Gastrocnemius medialis (tissue), 4 donors: ENCODE measurements at regions of chr17 and their contacts with region 1.

Region 1: GRCh38 chr17:63203652-63204051 is 237.6 kb downstream of the TANC2 start:
- DNase-seq: no peak
- ATAC-seq: no peak
- H3K4me3 ChIP-seq: no peak overlapping the region
- H3K27ac ChIP-seq: no peak overlapping the region
- H3K4me1 ChIP-seq: no peaks in the 10 kb centered on the region
- H3K27me3 ChIP-seq: no peaks in the 10 kb centered on the region
- CTCF ChIP-seq: no peak
- POLR2A ChIP-seq: no peak

Region 2: GRCh38 chr17:63262751-63263476 is 59.3 kb after region 1 on chr17:
- in situ Hi-C with region 1: loop called in 1 of 4 experiments (anchors 10 kb)
- intact Hi-C with region 1: no loop called
- DNase-seq: no peak
- ATAC-seq: no peak
- H3K4me3 ChIP-seq: no peak overlapping the region
- H3K27ac ChIP-seq: no peak overlapping the region
- H3K4me1 ChIP-seq: no peaks in the 10 kb centered on the region
- H3K27me3 ChIP-seq: no peaks in the 10 kb centered on the region
- CTCF ChIP-seq: no peak
- POLR2A ChIP-seq: no peak

Region 3: DNA sequence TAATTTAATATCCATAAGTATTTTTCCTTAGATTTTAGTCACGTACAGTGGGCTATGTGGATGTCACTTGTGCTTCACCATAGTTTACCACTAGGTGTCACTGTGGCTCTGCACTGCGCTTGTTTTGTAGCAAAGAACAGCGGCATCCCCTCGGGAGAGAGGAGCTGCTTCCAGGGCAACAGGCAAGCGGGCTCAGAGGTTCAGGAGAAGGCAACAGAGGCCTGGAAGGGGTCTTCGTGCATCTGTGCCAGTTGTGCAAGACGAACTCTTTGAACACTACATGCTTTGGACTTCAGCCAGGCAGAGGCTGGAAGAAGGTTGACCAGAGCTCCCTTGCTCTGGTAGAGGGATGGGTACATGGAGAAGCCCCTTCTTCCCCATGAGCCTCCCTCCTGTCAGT is 221.8 kb after region 1 on chr17:
- in situ Hi-C with region 1: no loop called
- intact Hi-C with region 1: no loop called
- DNase-seq: peak; percentile 58 to 67
- ATAC-seq: peak; percentile 79 to 97
- H3K4me3 ChIP-seq: no peak overlapping the region
- H3K27ac ChIP-seq: no peak overlapping the region
- H3K4me1 ChIP-seq: peaks cover 0 to 4% of the 10 kb centered on the region in 2 donors
- H3K27me3 ChIP-seq: no peaks in the 10 kb centered on the region
- CTCF ChIP-seq: peak; percentile 82 to 98 (median 91)
- POLR2A ChIP-seq: no peak